ENCODE measurements at regions of chr4 and their contacts with region 1.

Region 1: DNA sequence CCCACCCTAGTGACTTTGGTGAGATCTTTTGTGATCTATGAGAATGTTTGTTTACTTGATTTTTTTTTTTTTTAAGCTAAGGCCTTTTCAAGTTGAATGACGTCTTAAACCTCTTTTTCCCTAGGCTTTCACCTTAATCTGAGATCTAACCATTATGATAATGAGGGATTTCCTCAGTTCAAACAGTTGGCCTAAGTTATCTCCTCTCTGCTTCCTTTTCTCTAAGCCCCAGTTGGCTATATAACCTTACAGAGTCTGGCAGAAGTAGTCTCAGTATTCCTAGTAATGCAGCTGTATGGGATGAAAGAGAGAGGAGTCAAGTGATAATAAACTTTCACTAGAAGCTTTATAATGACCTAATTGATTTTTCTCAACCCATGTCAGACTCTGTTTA is 99.0 kb downstream of the STIM2 start:
- DNase-seq: no peak
- H3K4me3 Mint-ChIP-seq: no peak overlapping the region
- H3K27ac Mint-ChIP-seq: peak overlapping the region; percentile 18
- H3K4me1 Mint-ChIP-seq: peaks cover 46% of the 10 kb centered on the region
- H3K27me3 Mint-ChIP-seq: no peaks in the 10 kb centered on the region

Region 2: DNA sequence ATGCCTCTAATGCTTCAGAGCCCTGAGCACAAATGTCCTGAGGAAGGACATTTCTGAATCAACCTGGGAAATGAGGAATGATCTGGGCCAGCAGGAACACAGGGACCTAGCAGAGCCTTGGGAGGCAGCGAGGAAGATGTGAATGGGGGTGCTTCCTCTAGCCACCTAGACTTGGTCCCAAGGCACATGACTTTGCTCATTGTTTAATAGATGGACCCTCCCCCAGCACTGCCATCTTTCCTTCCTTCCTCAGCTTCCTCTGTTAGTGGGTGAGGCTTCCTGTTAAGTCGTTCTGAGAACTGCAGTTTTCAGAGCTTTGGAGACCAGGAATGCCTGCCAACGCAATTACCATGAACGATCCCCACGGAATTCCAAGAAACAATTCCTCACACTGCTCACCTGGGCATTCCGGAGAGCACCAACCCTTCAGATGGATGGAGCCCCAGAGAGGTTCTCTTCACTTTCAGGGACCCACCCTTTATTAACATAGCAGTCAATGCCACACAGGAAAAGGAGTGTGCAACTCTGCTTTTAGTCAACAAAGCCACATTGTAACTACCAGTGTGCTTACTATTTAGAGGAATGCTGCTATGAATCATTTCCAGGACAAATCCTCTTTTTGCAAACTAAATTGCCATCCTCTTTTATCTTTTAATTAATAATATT is 147.5 kb before region 1 on chr4:
- intact Hi-C with region 1: no loop called
- DNase-seq: no peak
- H3K4me3 Mint-ChIP-seq: no peak overlapping the region
- H3K27ac Mint-ChIP-seq: no peak overlapping the region
- H3K4me1 Mint-ChIP-seq: peaks cover 7% of the 10 kb centered on the region
- H3K27me3 Mint-ChIP-seq: no peaks in the 10 kb centered on the region

Region 3: GRCh38 chr4:26992657-26993361 is 33.2 kb after region 1 on chr4:
- intact Hi-C with region 1: loop called (anchors 1 kb)
- DNase-seq: no peak
- H3K4me3 Mint-ChIP-seq: no peak overlapping the region
- H3K27ac Mint-ChIP-seq: no peak overlapping the region
- H3K4me1 Mint-ChIP-seq: peaks cover 24% of the 10 kb centered on the region
- H3K27me3 Mint-ChIP-seq: no peaks in the 10 kb centered on the region

Region 4: DNA sequence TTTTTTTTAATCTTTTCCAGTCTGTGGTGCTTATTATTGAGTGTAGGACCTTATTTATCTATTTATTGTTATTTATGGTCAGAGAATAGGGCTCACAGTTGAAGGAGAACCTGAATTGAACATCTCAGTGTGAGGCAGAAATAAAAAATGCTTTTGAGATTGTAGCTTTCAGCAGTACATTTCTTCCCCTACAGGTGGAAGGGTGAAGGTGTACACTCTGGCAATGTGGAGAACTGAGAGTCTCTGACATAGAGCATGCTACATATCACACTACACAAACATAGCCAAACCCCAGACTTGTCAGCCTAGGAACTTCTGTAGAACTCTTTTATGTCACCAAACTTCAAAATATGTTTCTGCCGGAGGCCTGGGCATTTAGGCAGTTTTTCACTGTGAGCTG is 41.2 kb after region 1 on chr4:
- intact Hi-C with region 1: loop called (anchors 2 kb)
- DNase-seq: no peak
- H3K4me3 Mint-ChIP-seq: no peak overlapping the region
- H3K27ac Mint-ChIP-seq: no peak overlapping the region
- H3K4me1 Mint-ChIP-seq: peaks cover 48% of the 10 kb centered on the region
- H3K27me3 Mint-ChIP-seq: no peaks in the 10 kb centered on the region

Region 5: DNA sequence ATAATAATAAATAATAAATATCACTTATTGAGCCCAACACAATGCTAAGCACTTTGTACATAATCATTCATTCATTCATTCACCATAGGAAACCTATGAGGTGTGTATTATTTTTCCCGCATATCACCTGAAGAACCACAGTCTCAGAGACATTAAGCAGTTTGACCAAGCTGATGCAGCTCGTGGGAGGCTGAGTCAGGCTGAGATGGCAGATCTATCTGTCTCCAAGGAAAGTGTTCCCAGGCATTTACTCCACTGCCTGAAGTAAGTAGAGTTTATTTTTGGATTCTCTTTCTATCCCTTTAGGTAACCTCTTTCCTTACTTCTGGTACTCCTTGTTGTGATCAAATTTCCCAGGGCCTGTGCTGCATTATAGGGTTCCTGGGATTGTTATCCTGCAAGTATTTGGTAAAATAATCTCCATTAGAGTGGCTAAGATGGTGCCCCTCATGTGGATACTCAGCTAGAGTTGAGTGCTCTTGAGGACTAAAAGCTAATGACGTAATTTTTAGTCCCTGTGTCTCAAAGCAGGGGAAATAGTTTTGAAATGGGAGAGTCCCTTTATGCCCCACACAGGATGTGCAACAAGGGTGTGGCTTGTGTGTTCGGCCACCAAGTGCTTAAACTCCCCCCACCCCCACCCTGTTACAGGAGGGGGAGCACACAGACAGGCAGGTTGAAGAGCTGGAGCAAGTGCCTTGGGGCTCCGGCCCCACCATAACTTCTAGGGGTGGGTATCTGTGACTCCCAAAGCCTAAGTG is 367.9 kb after region 1 on chr4:
- intact Hi-C with region 1: no loop called
- DNase-seq: no peak
- H3K4me3 Mint-ChIP-seq: no peak overlapping the region
- H3K27ac Mint-ChIP-seq: no peak overlapping the region
- H3K4me1 Mint-ChIP-seq: no peaks in the 10 kb centered on the region
- H3K27me3 Mint-ChIP-seq: no peaks in the 10 kb centered on the region

Region 6: DNA sequence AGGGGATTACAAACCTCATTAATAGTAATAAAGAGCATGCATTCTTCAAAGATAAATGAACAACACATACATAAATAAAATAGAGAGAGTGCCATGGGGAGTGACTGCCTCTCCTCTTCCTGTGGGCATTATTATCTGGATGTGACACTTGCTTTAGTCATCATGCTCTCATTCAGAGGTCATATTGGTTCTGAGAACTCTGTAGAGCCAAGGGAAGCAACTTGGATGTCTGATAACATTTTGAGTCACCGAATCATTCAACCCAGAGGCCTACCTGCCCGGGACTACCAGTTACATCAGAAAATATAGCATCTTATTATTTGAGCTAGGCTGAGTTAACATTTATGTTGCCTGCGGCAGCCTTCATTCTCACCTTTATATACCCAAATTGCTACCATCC is 390.5 kb after region 1 on chr4:
- intact Hi-C with region 1: no loop called
- DNase-seq: no peak
- H3K4me3 Mint-ChIP-seq: no peak overlapping the region
- H3K27ac Mint-ChIP-seq: no peak overlapping the region
- H3K4me1 Mint-ChIP-seq: no peaks in the 10 kb centered on the region
- H3K27me3 Mint-ChIP-seq: no peaks in the 10 kb centered on the region

Measured in activated T-helper 1 cell treated with anti-CD3 and anti-CD28 coated beads, Interleukin-12 subunit alpha, Interleukin-12 subunit beta, Interleukin-2, Interleukin-4 antibody, amounts not matched to agents 30 ng/mL and 10 ng/mL and 1 ng/mL, durations not matched to agents 14 hours and 24 hours and 36 hours (primary cell).